Colonic mucosa (tissue), 4 donors: ENCODE measurements at regions of chr13 and their contacts with region 1.

Region 1: GRCh38 chr13:27533155-27533643 is 82.8 kb upstream of the MTIF3 start:
- DNase-seq: peak; percentile 87
- H3K4me3 ChIP-seq: peak overlapping the region; percentile 3
- H3K27ac ChIP-seq: no peak overlapping the region
- H3K4me1 ChIP-seq: no peaks in the 10 kb centered on the region
- H3K27me3 ChIP-seq: no peaks in the 10 kb centered on the region
- CTCF ChIP-seq: peak; percentile 88

Region 2: GRCh38 chr13:26929971-26930730 is 603.0 kb before region 1 on chr13:
- intact Hi-C with region 1: no loop called
- DNase-seq: peak; percentile 73
- H3K4me3 ChIP-seq: no peak overlapping the region
- H3K27ac ChIP-seq: no peak overlapping the region
- H3K4me1 ChIP-seq: no peaks in the 10 kb centered on the region
- H3K27me3 ChIP-seq: no peaks in the 10 kb centered on the region
- CTCF ChIP-seq: peak; percentile 97

Region 3: DNA sequence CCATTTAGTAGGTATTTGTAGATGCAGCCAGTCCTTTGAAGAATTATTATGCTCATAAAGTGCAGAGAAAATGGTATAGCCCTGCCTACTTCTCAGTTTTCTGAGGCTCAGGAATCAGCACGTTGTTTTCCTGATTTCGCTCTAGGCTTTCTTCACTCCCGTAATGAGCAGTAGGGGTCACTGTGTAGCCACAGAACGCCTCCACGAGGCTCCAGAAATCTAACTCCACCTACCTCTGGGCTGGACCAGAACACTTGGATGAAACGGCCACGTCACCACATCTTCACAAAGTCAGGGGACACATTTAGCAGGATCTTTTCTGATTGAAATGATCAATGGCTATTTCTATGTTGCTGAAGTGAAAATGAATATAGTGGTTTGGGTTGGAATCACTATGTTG is 158.5 kb before region 1 on chr13:
- intact Hi-C with region 1: loop called (anchors 5 kb)
- DNase-seq: peak; percentile 85
- H3K4me3 ChIP-seq: no peak overlapping the region
- H3K27ac ChIP-seq: peak overlapping the region; percentile 23
- H3K4me1 ChIP-seq: peaks cover 6% of the 10 kb centered on the region
- H3K27me3 ChIP-seq: no peaks in the 10 kb centered on the region
- CTCF ChIP-seq: peak; percentile 74

Region 4: GRCh38 chr13:27549406-27549981 is 16.3 kb after region 1 on chr13:
- intact Hi-C with region 1: no loop called
- DNase-seq: peak; percentile 88
- H3K4me3 ChIP-seq: no peak overlapping the region
- H3K27ac ChIP-seq: peak overlapping the region; percentile 42
- H3K4me1 ChIP-seq: no peaks in the 10 kb centered on the region
- H3K27me3 ChIP-seq: no peaks in the 10 kb centered on the region
- CTCF ChIP-seq: no peak

Region 5: DNA sequence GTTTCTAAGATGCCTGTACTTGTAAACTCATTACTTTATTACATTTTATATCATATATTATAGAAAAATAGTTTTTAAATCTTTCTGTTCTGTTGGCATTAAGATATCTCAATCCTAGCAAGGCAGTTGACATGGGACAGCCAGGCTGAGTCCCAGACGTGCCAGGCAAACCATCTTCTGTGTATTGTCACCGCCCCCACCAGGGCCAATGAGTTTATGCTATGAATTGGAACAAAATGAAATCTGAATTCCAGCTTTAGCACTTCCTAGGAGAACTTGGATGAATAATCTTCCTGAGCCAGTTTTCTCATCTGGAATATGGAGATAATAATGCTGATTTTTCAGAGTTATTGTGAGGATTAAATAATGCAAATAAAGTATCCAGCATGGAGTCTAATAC is 179.2 kb after region 1 on chr13:
- intact Hi-C with region 1: loop called (anchors 5 kb)
- DNase-seq: no peak
- H3K4me3 ChIP-seq: no peak overlapping the region
- H3K27ac ChIP-seq: no peak overlapping the region
- H3K4me1 ChIP-seq: no peaks in the 10 kb centered on the region
- H3K27me3 ChIP-seq: no peaks in the 10 kb centered on the region
- CTCF ChIP-seq: no peak